B cell (primary cell): ENCODE measurements at regions of chr22 and their contacts with region 1.

Region 1: GRCh38 chr22:26428515-26429457 is at the start of gene ASPHD2:
- DNase-seq: peak; percentile 95
- ATAC-seq: peak; percentile 78
- H3K4me3 ChIP-seq: peak within 1 kb of the TSS; percentile 30 to 100 (median 82)
- H3K4me3 Mint-ChIP-seq: peak within 1 kb of the TSS; percentile 90
- H3K27ac ChIP-seq: peak within 1 kb of the TSS; percentile 88 to 98
- H3K27ac Mint-ChIP-seq: peak within 1 kb of the TSS; percentile 97
- H3K4me1 ChIP-seq: peaks cover 45 to 48% of the 10 kb centered on the region in 2 donors
- H3K4me1 Mint-ChIP-seq: peaks cover 55% of the 10 kb centered on the region
- H3K27me3 ChIP-seq: no peaks in the 10 kb centered on the region
- H3K27me3 Mint-ChIP-seq: no peaks in the 10 kb centered on the region
- CTCF ChIP-seq: no peak
- total RNA-seq, gene ASPHD2: 7.3 and 8.0 TPM in 2 replicates

Region 2: GRCh38 chr22:26295563-26296126 is 133.1 kb before region 1 on chr22:
- CTCF ChIA-PET with region 1: no interaction called
- POLR2A ChIA-PET with region 1: interaction called, 8 read pairs
- intact Hi-C with region 1: loop called (anchors 2 kb)
- DNase-seq: no peak
- ATAC-seq: no peak
- H3K4me3 ChIP-seq: no peak overlapping the region
- H3K4me3 Mint-ChIP-seq: no peak overlapping the region
- H3K27ac ChIP-seq: no peak overlapping the region
- H3K27ac Mint-ChIP-seq: no peak overlapping the region
- H3K4me1 ChIP-seq: peaks cover 11 to 13% of the 10 kb centered on the region in 2 donors
- H3K4me1 Mint-ChIP-seq: peaks cover 13% of the 10 kb centered on the region
- H3K27me3 ChIP-seq: no peaks in the 10 kb centered on the region
- H3K27me3 Mint-ChIP-seq: no peaks in the 10 kb centered on the region
- CTCF ChIP-seq: no peak

Region 3: DNA sequence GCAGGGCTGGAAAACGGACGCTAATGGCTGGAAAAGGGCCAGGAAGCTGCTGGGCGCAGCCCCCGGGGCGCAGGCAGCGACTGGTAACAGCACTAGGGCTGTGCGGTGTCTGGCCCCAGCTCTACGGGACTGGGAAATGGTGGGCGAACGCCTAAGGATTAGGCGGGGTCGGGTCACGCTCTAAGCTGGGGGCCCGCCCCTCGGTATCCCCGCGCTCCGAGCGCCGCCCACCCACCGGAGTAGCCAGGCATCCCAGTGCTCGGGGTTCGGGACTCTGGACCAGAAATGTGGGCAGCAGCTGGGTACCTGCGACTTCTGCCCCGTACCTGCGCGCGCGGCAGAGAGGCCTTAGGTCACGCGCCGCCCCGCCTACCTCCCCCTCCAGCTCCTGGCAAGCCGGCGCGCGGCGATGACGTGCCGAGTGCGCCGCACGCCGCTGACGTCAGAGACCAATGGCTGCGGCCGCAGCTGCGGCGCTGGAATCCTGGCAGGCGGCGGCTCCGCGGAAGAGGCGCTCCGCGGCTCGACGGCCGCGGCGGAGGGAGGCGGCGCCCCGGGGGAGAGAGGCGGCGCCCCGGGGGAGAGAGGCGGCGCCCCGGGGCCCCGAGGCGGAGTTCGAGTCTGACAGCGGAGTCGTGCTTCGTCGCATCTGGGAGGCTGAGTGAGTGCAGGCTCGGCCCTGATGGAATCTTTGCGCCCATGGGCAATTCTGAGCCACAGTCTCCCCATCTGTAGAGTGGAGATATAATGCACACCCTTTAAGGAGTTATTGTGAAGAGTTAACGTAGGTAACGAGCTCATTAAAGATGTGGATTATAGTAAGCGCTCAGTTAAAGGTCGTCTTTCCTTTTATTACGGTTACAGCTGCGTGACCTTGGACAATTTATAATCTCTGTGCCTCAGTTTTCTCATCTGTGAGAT is 54.9 kb after region 1 on chr22 and contains the starts of genes HPS4 and SRRD:
- CTCF ChIA-PET with region 1: interaction called, 5 read pairs
- POLR2A ChIA-PET with region 1: interaction called, 4 read pairs
- intact Hi-C with region 1: loop called (anchors 1 kb)
- DNase-seq: peak; percentile 97
- ATAC-seq: peak; percentile 83
- H3K4me3 ChIP-seq: peak within 1 kb of the TSS; percentile 70 to 98 (median 83)
- H3K4me3 Mint-ChIP-seq: peak within 1 kb of the TSS; percentile 94
- H3K27ac ChIP-seq: peak within 1 kb of the TSS; percentile 90 to 98
- H3K27ac Mint-ChIP-seq: peak within 1 kb of the TSS; percentile 97
- H3K4me1 ChIP-seq: peaks cover 49 to 58% of the 10 kb centered on the region in 2 donors
- H3K4me1 Mint-ChIP-seq: peaks cover 69% of the 10 kb centered on the region
- H3K27me3 ChIP-seq: no peaks in the 10 kb centered on the region
- H3K27me3 Mint-ChIP-seq: no peaks in the 10 kb centered on the region
- CTCF ChIP-seq: no peak
- total RNA-seq, gene HPS4: 61.8 and 76.6 TPM in 2 replicates
- total RNA-seq, gene SRRD: 19.2 and 19.4 TPM in 2 replicates

Region 4: DNA sequence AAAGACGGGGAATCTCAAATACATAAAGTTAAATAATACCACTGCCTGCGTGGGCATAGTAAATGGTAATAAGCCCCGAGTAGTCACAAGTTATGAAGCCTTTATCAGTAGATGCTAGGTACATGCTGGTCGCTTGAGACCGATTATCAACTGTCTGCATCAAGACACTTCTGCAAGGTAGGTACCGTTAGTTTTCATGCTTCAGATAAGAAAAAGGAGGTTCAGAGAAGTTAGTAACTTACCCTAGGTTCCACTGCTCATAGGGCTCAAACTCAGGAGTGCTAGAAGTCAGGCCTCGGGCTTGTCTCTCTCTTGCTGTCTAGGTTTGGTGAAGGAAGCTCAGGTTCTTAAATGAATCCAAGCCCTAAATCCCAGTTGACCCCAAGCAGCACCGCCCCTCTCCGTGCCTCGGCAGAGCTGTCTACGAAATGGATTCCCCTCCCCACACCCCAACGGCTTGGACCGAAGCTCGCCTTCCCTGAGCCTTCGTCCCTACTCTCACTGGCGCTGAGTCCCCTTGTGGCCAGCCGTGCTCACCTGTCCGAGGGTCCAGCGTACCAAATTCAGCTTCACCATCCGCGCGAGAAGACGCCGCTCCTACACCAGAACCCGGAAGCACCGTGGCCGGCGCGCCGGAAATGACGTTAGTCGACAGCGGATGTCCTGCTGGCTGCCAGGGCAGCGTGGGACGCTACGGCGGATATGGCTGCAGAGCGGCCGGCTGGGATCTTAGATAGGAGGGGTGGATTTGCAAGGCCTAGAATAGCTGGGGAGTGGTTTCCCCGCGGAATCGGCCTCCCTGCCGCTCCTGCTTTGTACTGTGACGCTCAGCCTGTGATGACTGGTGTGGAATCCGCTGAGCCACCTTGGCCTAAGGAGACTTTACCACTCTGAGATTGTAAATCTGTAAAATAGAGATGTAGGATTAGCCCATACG is 83.3 kb after region 1 on chr22 and contains the start of gene TFIP11:
- CTCF ChIA-PET with region 1: no interaction called
- POLR2A ChIA-PET with region 1: no interaction called
- intact Hi-C with region 1: loop called (anchors 1 kb)
- DNase-seq: peak; percentile 91
- ATAC-seq: peak; percentile 95
- H3K4me3 ChIP-seq: peak within 1 kb of the TSS; percentile 72 to 97 (median 81)
- H3K4me3 Mint-ChIP-seq: peak within 1 kb of the TSS; percentile 100
- H3K27ac ChIP-seq: peak within 1 kb of the TSS; percentile 62 to 94
- H3K27ac Mint-ChIP-seq: peak within 1 kb of the TSS; percentile 96
- H3K4me1 ChIP-seq: peaks cover 17 to 21% of the 10 kb centered on the region in 2 donors
- H3K4me1 Mint-ChIP-seq: peaks cover 41% of the 10 kb centered on the region
- H3K27me3 ChIP-seq: no peaks in the 10 kb centered on the region
- H3K27me3 Mint-ChIP-seq: no peaks in the 10 kb centered on the region
- CTCF ChIP-seq: no peak
- total RNA-seq, gene TFIP11: 82.8 and 83.4 TPM in 2 replicates